Uterus (tissue), 4 donors: ENCODE measurements at regions of chr4 and their contacts with region 1.

Region 1: GRCh38 chr4:41661442-41662076 is 87.0 kb downstream of the PHOX2B start:
- DNase-seq: peak; percentile 24 to 42
- H3K4me3 ChIP-seq: no peak overlapping the region
- H3K27ac ChIP-seq: no peak overlapping the region
- H3K4me1 ChIP-seq: no peaks in the 10 kb centered on the region
- H3K27me3 ChIP-seq: no peaks in the 10 kb centered on the region
- CTCF ChIP-seq: peak; percentile 74 to 88 (median 79)
- POLR2A ChIP-seq: no peak

Region 2: GRCh38 chr4:41294445-41295062 is 367.0 kb before region 1 on chr4:
- intact Hi-C with region 1: loop called (anchors 5 kb)
- DNase-seq: no peak
- H3K4me3 ChIP-seq: no peak overlapping the region
- H3K27ac ChIP-seq: no peak overlapping the region
- H3K4me1 ChIP-seq: no peaks in the 10 kb centered on the region
- H3K27me3 ChIP-seq: no peaks in the 10 kb centered on the region
- CTCF ChIP-seq: no peak
- POLR2A ChIP-seq: no peak